PC-3 (cell line): ENCODE measurements at regions of chr15 and their contacts with region 1.

Region 1: GRCh38 chr15:80567721-80568157 is 127.4 kb upstream of the ABHD17C start:
- DNase-seq: peak; percentile 82
- ATAC-seq: peak; percentile 89
- H3K4me3 ChIP-seq: no peak overlapping the region
- H3K27ac ChIP-seq: peak overlapping the region; percentile 27
- H3K4me1 ChIP-seq: peaks cover 7% of the 10 kb centered on the region
- H3K27me3 ChIP-seq: no peaks in the 10 kb centered on the region
- CTCF ChIP-seq: peak; percentile 95

Region 2: DNA sequence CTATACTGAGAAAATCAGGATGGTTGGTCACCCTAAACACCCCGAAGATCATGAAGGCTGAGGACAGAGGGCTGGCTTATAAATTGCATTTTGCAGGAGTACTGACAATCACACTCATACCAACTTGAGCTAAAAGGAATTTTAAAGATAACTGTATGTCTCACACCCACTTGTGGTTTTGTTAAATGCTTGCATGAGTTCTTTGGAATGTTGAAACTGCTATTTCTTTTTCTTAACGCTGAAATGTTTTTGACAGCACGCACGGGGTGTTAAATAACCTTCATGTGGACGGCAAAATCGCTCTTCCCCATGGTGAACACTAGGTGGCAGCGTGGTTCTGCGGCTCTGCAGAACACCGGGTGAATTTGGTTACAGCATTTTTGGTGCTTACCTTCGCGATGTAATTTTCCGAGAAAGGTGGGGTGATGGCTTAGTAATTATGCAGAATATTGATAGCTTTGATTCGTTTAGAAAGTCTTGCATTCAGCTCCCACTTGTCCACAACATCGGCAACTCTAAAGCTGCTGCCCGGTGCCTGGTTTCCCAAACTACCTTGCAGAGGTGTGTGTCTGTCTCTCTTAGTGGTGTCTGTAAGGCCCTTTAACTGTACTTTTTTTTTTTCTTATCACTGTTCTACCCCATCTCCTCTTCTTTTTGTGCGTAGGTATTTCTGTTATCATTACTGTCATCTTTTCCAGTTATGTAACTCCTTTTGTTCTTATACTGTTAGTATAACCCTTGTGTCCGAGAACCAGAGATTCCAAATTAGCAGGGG is 111.9 kb before region 1 on chr15:
- CTCF ChIA-PET with region 1: no interaction called
- POLR2A ChIA-PET with region 1: no interaction called
- intact Hi-C with region 1: loop called (anchors 5 kb)
- DNase-seq: peak; percentile 85
- ATAC-seq: peak; percentile 77
- H3K4me3 ChIP-seq: 0 out of 2 replicates have a peak overlapping the region, but pooled peaks have one; percentile 1
- H3K27ac ChIP-seq: no peak overlapping the region
- H3K4me1 ChIP-seq: peaks cover 12% of the 10 kb centered on the region
- H3K27me3 ChIP-seq: no peaks in the 10 kb centered on the region
- CTCF ChIP-seq: peak; percentile 95

Region 3: GRCh38 chr15:80660122-80660521 is 92.4 kb after region 1 on chr15:
- CTCF ChIA-PET with region 1: interaction called, 9 read pairs
- POLR2A ChIA-PET with region 1: no interaction called
- intact Hi-C with region 1: loop called (anchors 2 kb)
- DNase-seq: peak; percentile 79
- ATAC-seq: peak; percentile 98
- H3K4me3 ChIP-seq: no peak overlapping the region
- H3K27ac ChIP-seq: 0 out of 2 replicates have a peak overlapping the region, but pooled peaks have one; percentile 12
- H3K4me1 ChIP-seq: peaks cover 18% of the 10 kb centered on the region
- H3K27me3 ChIP-seq: no peaks in the 10 kb centered on the region
- CTCF ChIP-seq: peak; percentile 81

Region 4: GRCh38 chr15:80695104-80695910 is 127.6 kb after region 1 on chr15 and contains the start of gene ABHD17C:
- CTCF ChIA-PET with region 1: interaction called, 4 read pairs
- POLR2A ChIA-PET with region 1: no interaction called
- intact Hi-C with region 1: loop called (anchors 2 kb)
- DNase-seq: peak; percentile 64
- ATAC-seq: peak; percentile 63
- H3K4me3 ChIP-seq: peak within 1 kb of the TSS; percentile 96
- H3K27ac ChIP-seq: peak within 1 kb of the TSS; percentile 76
- H3K4me1 ChIP-seq: peaks cover 68% of the 10 kb centered on the region
- H3K27me3 ChIP-seq: no peaks in the 10 kb centered on the region
- CTCF ChIP-seq: no peak
- total RNA-seq, gene ABHD17C: 10.3 and 14.2 TPM in 2 replicates

Region 5: GRCh38 chr15:80722811-80723210 is 155.1 kb after region 1 on chr15:
- CTCF ChIA-PET with region 1: interaction called, 17 read pairs
- POLR2A ChIA-PET with region 1: no interaction called
- intact Hi-C with region 1: no loop called
- DNase-seq: no peak
- ATAC-seq: no peak
- H3K4me3 ChIP-seq: no peak overlapping the region
- H3K27ac ChIP-seq: no peak overlapping the region
- H3K4me1 ChIP-seq: no peaks in the 10 kb centered on the region
- H3K27me3 ChIP-seq: no peaks in the 10 kb centered on the region
- CTCF ChIP-seq: no peak